ENCODE measurements at regions of chr5 and their contacts with region 1.

Region 1: DNA sequence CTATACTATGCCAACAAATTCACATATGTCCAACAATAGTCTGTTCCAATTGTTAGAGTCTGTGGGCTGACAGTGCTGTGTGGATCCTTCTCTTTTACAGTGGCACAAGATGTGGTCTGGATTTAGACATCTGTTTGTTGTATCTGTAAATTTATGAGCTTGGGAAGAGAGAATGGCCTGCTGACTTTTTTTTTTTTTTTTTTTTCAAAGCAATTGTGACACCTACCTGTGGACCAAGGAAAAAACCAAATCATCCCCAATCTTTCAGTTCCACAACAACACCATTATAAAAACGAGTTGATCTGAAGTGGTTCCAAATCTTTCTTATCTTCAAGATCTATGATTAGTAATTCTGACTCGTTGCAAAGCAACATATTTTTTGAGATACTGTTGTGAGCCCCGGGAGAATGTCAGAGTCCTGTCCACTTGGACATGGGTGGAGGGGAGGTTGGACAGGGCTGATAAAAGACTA is 4.9 kb downstream of the IRX2 start:
- DNase-seq: no peak
- ATAC-seq: no peak
- H3K4me3 Mint-ChIP-seq: no peak overlapping the region
- H3K27ac Mint-ChIP-seq: no peak overlapping the region
- H3K4me1 Mint-ChIP-seq: peaks cover 6% of the 10 kb centered on the region
- H3K27me3 Mint-ChIP-seq: peaks cover 62% of the 10 kb centered on the region
- CTCF ChIP-seq: no peak

Region 2: GRCh38 chr5:3602785-3603502 is 856.3 kb after region 1 on chr5:
- CTCF ChIA-PET with region 1: no interaction called
- POLR2A ChIA-PET with region 1: no interaction called
- intact Hi-C with region 1: loop called (anchors 5 kb)
- DNase-seq: peak; percentile 33
- ATAC-seq: peak; percentile 42
- H3K4me3 Mint-ChIP-seq: no peak overlapping the region
- H3K27ac Mint-ChIP-seq: no peak overlapping the region
- H3K4me1 Mint-ChIP-seq: peaks cover 6% of the 10 kb centered on the region
- H3K27me3 Mint-ChIP-seq: peaks cover 67% of the 10 kb centered on the region
- CTCF ChIP-seq: peak; percentile 55